Aorta (tissue), 5 donors: ENCODE measurements at regions of chr21 and their contacts with region 1.

Region 1: DNA sequence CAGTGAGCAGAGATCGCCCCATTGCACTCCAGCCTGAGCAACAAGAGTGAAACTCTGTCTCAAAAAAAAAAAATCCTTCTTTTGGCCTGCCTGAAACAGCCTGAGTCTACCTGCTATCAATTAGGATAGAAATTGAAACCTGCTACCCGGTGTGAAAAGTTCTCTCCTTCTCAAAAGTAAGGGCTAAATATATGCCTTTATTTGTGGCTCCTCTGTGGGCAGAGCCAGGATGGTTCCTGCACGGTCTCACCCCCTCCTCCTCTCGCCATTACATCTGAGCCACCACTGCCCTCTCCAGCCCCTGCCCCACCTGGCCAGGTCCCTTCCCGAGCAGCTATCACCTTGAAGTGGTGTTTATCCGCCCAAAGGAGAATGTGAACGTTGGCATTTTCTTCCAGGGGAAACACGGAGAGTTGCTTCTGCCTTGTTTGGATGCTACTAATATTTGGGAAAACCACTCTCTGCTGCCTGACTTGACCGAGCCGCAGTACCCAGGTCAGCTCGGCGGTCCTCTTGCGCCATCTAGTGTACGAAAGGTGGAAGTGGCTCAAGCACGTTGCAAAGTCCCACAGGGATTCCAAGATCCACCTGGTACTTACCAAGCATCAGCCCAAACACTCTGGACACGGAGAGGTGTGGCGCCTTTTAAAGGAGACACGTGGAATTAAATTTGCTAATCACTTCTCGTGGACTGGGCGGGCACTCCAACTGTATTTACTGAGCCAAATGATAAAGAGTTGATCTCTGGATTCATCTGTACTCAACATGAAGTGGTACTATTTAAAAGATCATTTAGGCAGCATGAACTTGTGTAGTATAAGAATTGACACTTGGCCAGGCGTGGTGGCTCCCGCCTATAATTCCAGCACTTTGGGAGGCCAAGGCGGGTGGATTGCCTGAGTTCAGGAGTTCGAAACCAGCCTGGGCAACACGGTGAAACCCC is 31.9 kb downstream of the SETD4 start:
- DNase-seq: peak; percentile 74 to 85
- ATAC-seq: peak; percentile 89
- H3K4me3 ChIP-seq: no peak overlapping the region
- H3K27ac ChIP-seq: no peak overlapping the region
- H3K4me1 ChIP-seq: no peaks in the 10 kb centered on the region
- H3K27me3 ChIP-seq: no peaks in the 10 kb centered on the region

Region 2: DNA sequence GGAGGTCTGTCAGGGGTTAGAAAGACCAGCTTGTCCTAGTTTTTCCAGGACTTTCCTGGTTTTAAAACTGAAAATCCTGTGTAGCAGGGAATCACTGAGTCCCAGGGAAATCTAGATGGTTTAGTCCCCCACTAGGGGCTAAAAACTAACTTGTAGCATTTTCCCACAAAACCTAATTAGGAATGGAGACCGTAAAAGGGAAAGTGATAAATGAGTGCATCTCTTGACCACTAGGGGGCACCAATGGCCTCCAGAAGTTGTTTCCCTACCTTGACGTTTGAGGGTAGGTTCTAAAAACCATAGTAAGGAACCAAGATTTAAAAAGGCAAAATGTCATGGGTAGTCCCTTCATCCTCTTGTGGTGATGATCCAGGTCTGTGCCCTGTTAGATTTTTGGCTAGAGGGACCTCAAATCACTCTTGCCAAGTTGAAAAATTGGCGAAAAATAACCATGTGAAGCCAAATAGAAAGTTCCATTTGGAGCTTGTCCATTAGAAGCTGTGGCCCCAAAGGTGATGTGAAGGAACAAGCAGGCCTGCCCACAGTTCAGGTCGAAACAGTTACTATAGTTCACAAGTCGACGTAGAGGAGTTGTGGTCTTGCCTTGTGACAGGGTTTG is 1335.1 kb before region 1 on chr21:
- intact Hi-C with region 1: loop called in 1 of 2 experiments (anchors 5 kb)
- DNase-seq: no peak
- ATAC-seq: peak; percentile 66
- H3K4me3 ChIP-seq: no peak overlapping the region
- H3K27ac ChIP-seq: no peak overlapping the region
- H3K4me1 ChIP-seq: no peaks in the 10 kb centered on the region
- H3K27me3 ChIP-seq: no peaks in the 10 kb centered on the region

Region 3: DNA sequence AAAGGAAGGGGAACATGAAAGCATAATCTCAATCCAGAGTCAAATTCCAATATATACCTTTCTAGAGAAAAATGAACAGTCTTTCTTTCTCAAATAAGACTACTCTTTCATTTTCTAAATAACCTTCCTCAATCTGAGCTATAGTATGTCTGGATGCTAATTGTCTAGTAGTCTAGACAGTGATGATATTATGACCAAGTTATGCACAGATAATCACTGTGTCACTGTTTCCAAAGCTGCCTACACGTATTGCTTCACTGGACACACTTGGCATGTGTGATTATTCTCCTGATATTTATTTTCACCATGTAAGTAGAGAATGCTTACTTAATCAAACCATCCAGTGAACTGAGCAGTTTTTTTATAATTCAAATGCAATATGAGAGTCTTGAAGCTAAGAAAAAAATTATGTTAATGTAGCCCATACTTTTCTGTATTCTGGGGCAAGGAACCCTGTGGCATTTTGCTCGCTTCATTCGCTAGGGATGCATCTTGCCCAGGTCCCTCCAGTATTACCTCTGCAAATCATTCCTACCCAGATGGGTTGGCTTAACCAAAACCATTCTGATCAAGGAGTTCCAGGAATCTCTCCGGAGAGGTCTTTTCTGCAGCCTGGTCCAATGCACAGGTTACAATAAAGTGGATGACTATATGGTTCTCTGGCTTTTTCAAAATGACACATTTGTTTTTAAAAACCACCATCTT is 676.2 kb before region 1 on chr21:
- intact Hi-C with region 1: no loop called
- DNase-seq: no peak
- ATAC-seq: no peak
- H3K4me3 ChIP-seq: no peak overlapping the region
- H3K27ac ChIP-seq: no peak overlapping the region
- H3K4me1 ChIP-seq: no peaks in the 10 kb centered on the region
- H3K27me3 ChIP-seq: no peaks in the 10 kb centered on the region

Region 4: GRCh38 chr21:36156339-36156814 is 128.0 kb after region 1 on chr21:
- intact Hi-C with region 1: no loop called
- DNase-seq: peak; percentile 100
- ATAC-seq: peak; percentile 98
- H3K4me3 ChIP-seq: peak overlapping the region; percentile 75 to 95
- H3K27ac ChIP-seq: no peak overlapping the region
- H3K4me1 ChIP-seq: no peaks in the 10 kb centered on the region
- H3K27me3 ChIP-seq: no peaks in the 10 kb centered on the region